Psoas muscle (tissue), 8 donors: ENCODE measurements at regions of chr10 and their contacts with region 1.

Region 1: DNA sequence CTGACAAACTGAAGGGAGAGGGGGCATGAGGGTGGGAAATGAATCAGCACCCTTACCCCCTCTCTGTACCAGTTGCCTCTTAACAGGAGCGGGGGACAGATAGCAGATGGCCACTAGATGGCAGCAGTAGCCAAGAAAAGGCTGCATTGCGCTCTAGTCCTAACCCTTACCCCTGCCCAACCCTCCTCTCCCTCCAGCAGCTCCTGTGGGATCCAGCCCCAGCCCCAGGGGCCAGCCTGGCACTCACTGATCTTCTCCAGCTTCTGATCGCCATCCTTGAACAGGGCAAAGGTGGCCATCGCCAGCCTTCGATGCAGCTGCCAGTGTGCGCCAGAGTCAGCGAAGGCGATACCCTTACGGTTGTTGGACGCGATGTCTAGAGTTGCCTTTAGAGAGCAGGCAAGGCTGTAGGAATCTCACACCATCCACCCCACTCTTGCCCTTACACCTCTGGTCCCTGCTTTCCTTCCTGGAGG is 2.2 kb downstream of the CYP17A1 start:
- DNase-seq: peak; percentile 65 to 82
- ATAC-seq: peak; percentile 82 to 92 (median 89)
- H3K4me3 ChIP-seq: no peak overlapping the region
- H3K27ac ChIP-seq: no peak overlapping the region
- H3K4me1 ChIP-seq: no peaks in the 10 kb centered on the region
- H3K27me3 ChIP-seq: no peaks in the 10 kb centered on the region
- CTCF ChIP-seq: peak; percentile 81

Region 2: GRCh38 chr10:102729029-102730026 is 105.7 kb before region 1 on chr10:
- intact Hi-C with region 1: loop called in 1 of 2 experiments (anchors 2 kb)
- DNase-seq: peak; percentile 90 to 94
- ATAC-seq: peak; percentile 96 to 99 (median 97)
- H3K4me3 ChIP-seq: no peak overlapping the region
- H3K27ac ChIP-seq: no peak overlapping the region
- H3K4me1 ChIP-seq: no peaks in the 10 kb centered on the region
- H3K27me3 ChIP-seq: no peaks in the 10 kb centered on the region
- CTCF ChIP-seq: peak; percentile 92

Region 3: GRCh38 chr10:102743588-102744373 is 91.3 kb before region 1 on chr10 and contains the start of gene WBP1L:
- intact Hi-C with region 1: no loop called
- DNase-seq: peak; percentile 95 to 97
- ATAC-seq: peak; percentile 96 to 98 (median 96)
- H3K4me3 ChIP-seq: peak within 1 kb of the TSS; percentile 96
- H3K27ac ChIP-seq: peak within 1 kb of the TSS; percentile 96
- H3K4me1 ChIP-seq: peaks cover 14% of the 10 kb centered on the region
- H3K27me3 ChIP-seq: no peaks in the 10 kb centered on the region
- CTCF ChIP-seq: no peak
- total RNA-seq, gene WBP1L: 47.2 to 77.2 (median 54.5) TPM

Region 4: GRCh38 chr10:102904346-102904745 is 69.3 kb after region 1 on chr10:
- intact Hi-C with region 1: loop called (anchors 2 to 5 kb)
- DNase-seq: no peak
- ATAC-seq: no peak
- H3K4me3 ChIP-seq: no peak overlapping the region
- H3K27ac ChIP-seq: no peak overlapping the region
- H3K4me1 ChIP-seq: no peaks in the 10 kb centered on the region
- H3K27me3 ChIP-seq: no peaks in the 10 kb centered on the region
- CTCF ChIP-seq: no peak

Region 5: DNA sequence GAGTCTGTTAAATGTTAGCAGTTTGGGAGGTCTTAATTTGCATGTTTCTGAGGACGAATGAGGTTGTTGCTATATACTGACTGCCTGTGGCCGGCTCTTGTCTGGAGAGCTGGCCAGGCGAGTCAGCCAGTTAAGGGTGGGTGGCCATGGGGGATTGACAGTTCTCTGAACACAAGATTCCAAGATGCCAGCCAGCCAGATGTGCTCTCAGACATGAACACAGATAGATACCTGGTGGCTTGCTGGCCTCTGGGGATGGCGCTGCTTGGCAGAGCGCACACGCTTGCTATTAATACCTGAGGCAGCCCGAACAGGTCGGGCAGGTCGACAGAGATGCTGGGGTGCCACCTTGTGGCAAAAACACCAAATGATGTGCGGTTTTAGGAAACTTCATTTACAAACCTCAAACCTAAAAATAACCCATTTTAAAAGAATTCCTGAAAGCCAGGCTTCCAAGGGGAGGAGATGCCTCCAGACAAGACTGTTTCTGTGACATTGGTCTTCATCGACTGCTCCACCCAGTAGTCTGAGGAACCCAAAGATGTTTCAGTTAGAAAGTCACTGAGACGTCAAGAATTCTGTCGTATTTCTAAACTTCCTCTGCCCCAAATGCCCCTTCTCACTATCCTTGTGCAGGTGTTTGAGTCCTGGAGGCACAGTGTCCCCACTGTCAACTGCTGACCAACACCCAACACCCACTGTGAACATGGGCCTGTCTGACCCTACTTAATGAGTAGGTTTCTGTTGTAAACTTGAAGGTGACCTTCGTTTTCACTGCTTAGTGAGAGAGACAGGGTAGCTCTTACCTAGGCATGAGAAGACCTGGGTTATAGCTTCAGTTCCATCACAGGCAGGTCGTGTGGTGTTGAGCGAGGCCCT is 234.6 kb after region 1 on chr10:
- intact Hi-C with region 1: loop called in 1 of 2 experiments (anchors 2 kb)
- DNase-seq: peak; percentile 30 to 65
- ATAC-seq: peak; percentile 74 to 81 (median 78)
- H3K4me3 ChIP-seq: no peak overlapping the region
- H3K27ac ChIP-seq: no peak overlapping the region
- H3K4me1 ChIP-seq: no peaks in the 10 kb centered on the region
- H3K27me3 ChIP-seq: no peaks in the 10 kb centered on the region
- CTCF ChIP-seq: peak; percentile 62

Region 6: DNA sequence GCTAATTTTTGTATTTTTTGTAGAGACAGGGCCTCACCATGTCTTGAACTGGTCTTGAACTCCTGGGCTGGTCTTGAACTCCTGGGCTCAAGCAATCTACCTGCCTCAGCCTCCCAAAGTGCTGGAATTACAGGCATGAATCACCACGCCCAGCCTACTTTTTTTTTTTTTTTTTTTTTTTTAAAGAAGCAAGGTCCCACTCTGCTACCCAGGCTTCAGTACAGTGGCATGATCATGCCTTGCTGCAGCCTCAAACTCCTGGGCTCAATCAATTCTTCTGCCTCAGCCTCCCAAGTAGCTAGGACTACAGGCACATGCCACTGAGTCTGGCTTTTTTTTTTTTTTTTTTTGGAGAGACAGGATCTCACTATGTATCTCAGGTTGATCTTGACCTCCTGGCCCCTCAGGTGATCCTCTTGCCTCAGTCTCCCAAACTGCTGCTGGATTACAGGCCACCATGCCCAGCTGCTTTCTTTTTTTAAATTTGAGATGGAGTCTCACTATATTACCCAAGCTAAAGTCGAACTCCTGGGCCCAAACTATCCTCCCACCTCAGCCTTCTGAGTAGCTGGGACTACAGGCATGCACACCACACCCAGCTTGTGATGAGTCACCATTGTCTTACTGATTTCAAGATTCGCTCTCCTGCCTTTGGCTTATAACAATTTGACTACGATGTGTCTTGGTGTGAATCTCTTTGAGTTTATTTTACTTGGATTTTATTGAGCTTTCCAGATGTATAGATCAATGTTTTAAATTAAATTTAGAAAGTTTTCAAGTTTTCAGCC is 419.7 kb after region 1 on chr10:
- intact Hi-C with region 1: loop called in 1 of 2 experiments (anchors 10 kb)
- DNase-seq: no peak
- ATAC-seq: no peak
- H3K4me3 ChIP-seq: no peak overlapping the region
- H3K27ac ChIP-seq: no peak overlapping the region
- H3K4me1 ChIP-seq: no peaks in the 10 kb centered on the region
- H3K27me3 ChIP-seq: no peaks in the 10 kb centered on the region
- CTCF ChIP-seq: no peak